ENCODE measurements at regions of chr15 and their contacts with region 1.

Region 1: DNA sequence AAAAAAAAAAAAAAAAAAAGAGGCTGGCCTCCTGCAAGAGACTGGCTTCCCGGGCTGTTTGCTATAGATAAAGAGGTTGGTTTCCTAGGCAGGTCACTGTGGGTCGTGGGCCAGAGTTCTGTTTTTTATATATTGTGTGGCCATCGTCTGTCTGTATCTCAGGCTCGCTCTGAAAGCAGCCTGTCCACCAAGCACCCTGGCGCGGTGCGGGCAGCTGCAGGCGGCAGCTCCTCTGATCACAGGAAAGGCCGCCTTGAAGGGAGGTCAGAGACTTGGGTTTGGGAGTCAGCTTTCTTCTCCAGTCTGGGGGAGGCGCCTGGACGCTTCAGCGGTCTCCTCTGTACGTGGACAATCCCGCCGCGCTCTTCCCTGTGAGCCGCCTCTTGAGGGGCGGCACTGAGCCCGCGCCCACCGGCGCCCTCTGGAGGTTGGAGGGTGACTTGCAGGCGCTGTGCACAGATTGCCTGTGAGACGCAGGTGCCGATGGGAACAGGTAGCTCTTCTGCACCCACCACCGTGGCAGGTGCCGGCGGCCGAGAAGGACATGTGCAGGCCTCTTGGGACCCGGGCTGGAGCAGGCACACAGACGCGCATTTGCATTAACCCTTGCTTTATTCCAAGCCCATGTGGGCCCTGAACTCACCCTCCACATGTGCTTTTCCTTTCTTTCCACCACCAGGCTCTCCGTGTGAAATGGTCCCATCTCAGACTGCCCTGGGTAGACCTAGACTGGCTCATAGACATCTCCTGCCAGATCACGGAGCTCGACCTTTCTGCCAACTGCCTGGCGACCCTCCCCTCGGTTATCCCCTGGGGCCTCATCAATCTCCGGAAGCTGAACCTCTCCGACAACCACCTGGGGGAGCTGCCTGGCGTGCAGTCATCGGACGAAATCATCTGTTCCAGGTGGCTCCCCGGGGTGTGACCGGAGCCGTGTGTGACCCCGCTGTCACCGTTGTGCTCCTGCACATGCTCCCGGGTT is 89.3 kb downstream of the LRRK1 start:
- DNase-seq: peak; percentile 84
- H3K4me3 ChIP-seq: peak overlapping the region; percentile 49
- H3K27ac ChIP-seq: no peak overlapping the region
- H3K4me1 ChIP-seq: peaks cover 6% of the 10 kb centered on the region
- H3K27me3 ChIP-seq: no peaks in the 10 kb centered on the region
- CTCF ChIP-seq: peak; percentile 97

Region 2: GRCh38 chr15:100349696-100350433 is 658.6 kb before region 1 on chr15:
- CTCF ChIA-PET with region 1: no interaction called
- POLR2A ChIA-PET with region 1: no interaction called
- intact Hi-C with region 1: loop called (anchors 5 kb)
- DNase-seq: peak; percentile 88
- H3K4me3 ChIP-seq: peak overlapping the region; percentile 50
- H3K27ac ChIP-seq: peak overlapping the region; percentile 25
- H3K4me1 ChIP-seq: no peaks in the 10 kb centered on the region
- H3K27me3 ChIP-seq: no peaks in the 10 kb centered on the region
- CTCF ChIP-seq: peak; percentile 78

Region 3: DNA sequence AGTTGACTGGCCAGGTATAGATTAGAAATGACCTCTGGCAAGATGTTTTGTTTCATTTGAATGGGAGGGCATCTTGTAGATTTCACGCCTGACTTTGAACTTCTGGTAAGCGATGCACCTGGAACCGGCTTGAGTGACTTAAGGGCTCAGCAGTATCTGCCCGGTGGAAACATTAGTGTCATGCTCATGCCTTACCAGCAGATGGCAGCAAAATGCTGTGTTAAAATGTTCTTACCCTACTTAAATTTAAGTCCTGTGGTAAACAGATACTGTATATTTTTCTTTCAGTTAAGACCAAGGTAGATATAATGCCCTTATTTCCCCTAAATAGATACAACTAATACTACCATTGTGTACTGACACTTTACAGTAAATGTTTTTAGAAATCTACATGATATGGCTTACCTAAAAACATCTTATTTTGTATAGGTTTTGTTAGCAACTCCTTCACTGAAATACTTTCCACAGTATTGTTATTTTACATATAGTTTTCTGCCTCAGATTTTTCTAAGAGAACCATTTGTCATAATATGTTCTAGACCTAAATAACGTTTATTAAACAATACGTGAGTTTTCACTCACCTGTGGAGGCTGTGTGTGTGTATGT is 380.6 kb before region 1 on chr15:
- CTCF ChIA-PET with region 1: interaction called, 4 read pairs
- POLR2A ChIA-PET with region 1: no interaction called
- intact Hi-C with region 1: loop called (anchors 1 kb)
- DNase-seq: peak; percentile 69
- H3K4me3 ChIP-seq: no peak overlapping the region
- H3K27ac ChIP-seq: no peak overlapping the region
- H3K4me1 ChIP-seq: no peaks in the 10 kb centered on the region
- H3K27me3 ChIP-seq: no peaks in the 10 kb centered on the region
- CTCF ChIP-seq: peak; percentile 81

Region 4: GRCh38 chr15:100663086-100663914 is 345.1 kb before region 1 on chr15:
- CTCF ChIA-PET with region 1: no interaction called
- POLR2A ChIA-PET with region 1: no interaction called
- intact Hi-C with region 1: loop called (anchors 10 kb)
- DNase-seq: peak; percentile 65
- H3K4me3 ChIP-seq: no peak overlapping the region
- H3K27ac ChIP-seq: no peak overlapping the region
- H3K4me1 ChIP-seq: peaks cover 13% of the 10 kb centered on the region
- H3K27me3 ChIP-seq: no peaks in the 10 kb centered on the region
- CTCF ChIP-seq: peak; percentile 45

Region 5: GRCh38 chr15:100918034-100918689 is 90.3 kb before region 1 on chr15:
- CTCF ChIA-PET with region 1: interaction called, 46 read pairs
- POLR2A ChIA-PET with region 1: no interaction called
- intact Hi-C with region 1: loop called (anchors 1 kb)
- DNase-seq: peak; percentile 89
- H3K4me3 ChIP-seq: peak overlapping the region; percentile 51
- H3K27ac ChIP-seq: no peak overlapping the region
- H3K4me1 ChIP-seq: no peaks in the 10 kb centered on the region
- H3K27me3 ChIP-seq: peaks cover 32% of the 10 kb centered on the region
- CTCF ChIP-seq: peak; percentile 92

Region 6: DNA sequence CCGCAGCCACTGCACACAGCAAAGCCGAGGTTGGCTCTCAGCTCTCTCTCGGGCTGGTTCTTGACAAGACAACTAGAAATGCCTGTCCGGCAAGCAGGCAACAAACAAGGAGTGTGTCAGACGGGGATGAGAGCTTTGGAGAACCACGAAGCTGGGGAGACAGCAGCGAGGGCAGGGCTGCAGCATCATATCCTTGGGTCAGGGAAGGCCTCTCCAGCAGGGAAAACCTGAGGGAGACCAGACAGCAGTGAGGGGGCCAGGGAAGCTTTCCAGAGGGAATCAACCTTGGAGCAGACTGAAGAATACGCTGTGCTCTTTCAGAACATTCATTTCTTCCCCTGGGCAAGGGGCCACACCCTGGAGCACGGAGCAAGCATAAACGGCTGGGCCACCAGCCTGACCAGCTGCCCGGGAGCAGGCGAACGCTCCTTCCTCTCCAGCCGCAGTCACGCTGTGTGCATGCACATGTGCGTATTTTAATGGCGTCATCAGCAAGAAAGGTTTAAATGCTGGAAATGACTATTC is 184.7 kb after region 1 on chr15:
- CTCF ChIA-PET with region 1: no interaction called
- POLR2A ChIA-PET with region 1: no interaction called
- intact Hi-C with region 1: no loop called
- DNase-seq: no peak
- H3K4me3 ChIP-seq: no peak overlapping the region
- H3K27ac ChIP-seq: peak overlapping the region; percentile 19
- H3K4me1 ChIP-seq: peaks cover 29% of the 10 kb centered on the region
- H3K27me3 ChIP-seq: no peaks in the 10 kb centered on the region
- CTCF ChIP-seq: no peak